Naive thymus-derived CD4-positive, alpha-beta T cell (primary cell): ENCODE measurements at regions of chr9 and their contacts with region 1.

Region 1: DNA sequence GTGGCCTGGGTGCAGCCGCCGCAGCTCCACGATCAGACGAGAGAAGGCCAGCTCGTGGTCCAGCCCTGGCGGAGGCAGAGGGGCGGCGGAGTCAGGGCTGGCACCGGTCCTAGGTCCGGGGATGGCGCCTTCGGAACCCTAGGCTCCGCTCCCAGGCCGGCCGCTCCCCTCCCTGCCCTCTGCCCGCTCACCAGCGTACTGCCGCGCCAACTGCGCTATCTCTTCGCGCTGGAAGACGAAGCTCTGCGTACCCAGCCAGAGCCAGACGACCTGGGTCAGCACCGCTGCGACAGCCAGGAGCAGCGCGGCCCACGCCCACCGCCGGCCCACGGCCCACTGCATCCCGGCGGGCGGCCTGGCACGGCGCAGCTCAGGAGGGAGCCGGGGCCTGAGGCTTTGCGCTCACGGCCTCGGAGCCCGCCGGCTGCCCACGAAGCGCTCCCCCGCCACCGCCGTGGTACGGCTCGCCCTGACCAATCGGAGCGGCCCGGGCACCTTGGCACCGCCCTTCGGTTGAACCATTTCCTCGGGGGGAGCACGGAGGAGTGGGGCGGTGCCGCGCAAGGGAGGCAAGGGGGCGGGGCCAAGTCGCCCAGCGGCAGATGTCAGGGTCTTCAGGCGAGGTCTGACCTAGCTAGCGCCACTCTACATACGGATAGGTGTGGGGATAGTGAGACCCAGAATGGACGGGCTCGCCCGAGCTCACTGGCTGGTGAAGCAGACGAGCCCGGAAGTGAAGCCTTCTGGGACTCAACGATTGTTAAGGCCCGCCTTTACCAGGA is at the start of gene SIGMAR1:
- DNase-seq: peak; percentile 88 to 97 (median 95)
- ATAC-seq: peak; percentile 97
- H3K4me3 ChIP-seq: peak within 1 kb of the TSS; percentile 94
- H3K4me3 Mint-ChIP-seq: peak within 1 kb of the TSS; percentile 88 to 93 (median 90)
- H3K27ac ChIP-seq: peak within 1 kb of the TSS; percentile 70
- H3K27ac Mint-ChIP-seq: peak within 1 kb of the TSS; percentile 88 to 98 (median 95)
- H3K4me1 ChIP-seq: peaks cover 21 to 22% of the 10 kb centered on the region in 2 donors
- H3K4me1 Mint-ChIP-seq: peaks cover 26 to 45% (median 37%) of the 10 kb centered on the region in 7 donors
- H3K27me3 ChIP-seq: no peaks in the 10 kb centered on the region
- H3K27me3 Mint-ChIP-seq: no peaks in the 10 kb centered on the region
- total RNA-seq, gene SIGMAR1: 20.7 to 63.8 (median 46.0) TPM

Region 2: DNA sequence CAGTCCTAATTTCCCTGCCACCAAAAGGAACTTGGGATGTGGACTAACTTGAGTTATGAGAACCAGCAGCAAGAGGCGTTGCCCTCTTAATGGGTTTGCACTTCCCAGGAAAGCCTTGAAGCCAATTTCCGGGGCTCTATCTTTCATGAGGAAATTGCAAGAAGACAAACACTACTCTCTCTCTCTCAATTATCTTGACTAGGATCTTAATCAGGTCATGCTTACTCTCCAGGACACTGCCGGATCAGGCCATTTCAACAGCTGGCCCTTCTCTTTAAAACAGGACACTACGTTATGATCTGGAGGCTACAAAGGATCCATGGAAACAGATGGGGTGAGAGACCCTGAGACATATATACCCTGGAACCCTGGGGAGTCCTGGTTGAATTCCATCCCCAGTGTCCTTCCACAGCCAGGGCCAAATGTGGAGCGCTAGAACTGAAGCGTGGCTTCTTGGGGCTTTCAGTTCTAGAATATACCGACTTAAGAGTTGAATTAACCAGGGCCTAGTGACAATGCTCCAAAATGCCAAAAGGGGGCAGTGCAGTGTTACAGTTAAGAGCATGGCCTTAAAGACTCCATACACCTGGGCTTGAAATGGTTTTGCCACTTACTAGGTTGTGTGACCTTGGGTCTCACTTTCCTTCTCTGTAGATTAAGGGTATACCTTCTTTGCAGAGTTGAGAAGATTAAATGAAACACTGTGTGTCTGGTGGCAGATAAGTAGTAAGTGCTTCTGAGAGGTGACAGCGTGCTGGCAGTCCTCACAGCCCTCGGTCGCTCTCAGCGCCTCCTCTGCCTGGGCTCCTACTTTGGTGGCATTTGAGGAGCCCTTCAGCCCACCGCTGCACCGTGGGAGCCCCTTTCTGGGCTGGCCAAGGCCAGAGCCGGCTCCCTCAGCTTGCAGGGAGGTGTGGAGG is 200.3 kb before region 1 on chr9:
- CTCF ChIA-PET with region 1: interaction called, 4 read pairs
- POLR2A ChIA-PET with region 1: no interaction called
- intact Hi-C with region 1: loop called in 1 of 2 experiments (anchors 1 kb)
- DNase-seq: peak in 8 of 9 donors; percentile 49 to 74 (median 65)
- ATAC-seq: peak; percentile 92
- H3K4me3 ChIP-seq: no peak overlapping the region
- H3K4me3 Mint-ChIP-seq: no peak overlapping the region
- H3K27ac ChIP-seq: no peak overlapping the region
- H3K27ac Mint-ChIP-seq: no peak overlapping the region
- H3K4me1 ChIP-seq: peaks cover 0 to 6% of the 10 kb centered on the region in 2 donors
- H3K4me1 Mint-ChIP-seq: peaks cover 6 to 26% (median 17%) of the 10 kb centered on the region in 7 donors
- H3K27me3 ChIP-seq: no peaks in the 10 kb centered on the region
- H3K27me3 Mint-ChIP-seq: no peaks in the 10 kb centered on the region

Region 3: GRCh38 chr9:34546834-34547827 is 90.4 kb before region 1 on chr9:
- CTCF ChIA-PET with region 1: interaction called, 4 read pairs
- POLR2A ChIA-PET with region 1: no interaction called
- intact Hi-C with region 1: loop called (anchors 1 kb)
- DNase-seq: peak in 5 of 9 donors; percentile 21 to 47 (median 23)
- ATAC-seq: peak; percentile 58
- H3K4me3 ChIP-seq: no peak overlapping the region
- H3K4me3 Mint-ChIP-seq: peak overlapping the region in 1 of 10 donors; percentile 34
- H3K27ac ChIP-seq: no peak overlapping the region
- H3K27ac Mint-ChIP-seq: no peak overlapping the region
- H3K4me1 ChIP-seq: no peaks in the 10 kb centered on the region
- H3K4me1 Mint-ChIP-seq: peaks cover 0 to 10% (median 0%) of the 10 kb centered on the region in 7 donors
- H3K27me3 ChIP-seq: no peaks in the 10 kb centered on the region
- H3K27me3 Mint-ChIP-seq: peaks cover 7 to 34% (median 12%) of the 10 kb centered on the region in 5 donors

Region 4: GRCh38 chr9:34603610-34604231 is 33.8 kb before region 1 on chr9:
- CTCF ChIA-PET with region 1: interaction called, 98 read pairs
- POLR2A ChIA-PET with region 1: no interaction called
- intact Hi-C with region 1: no loop called
- DNase-seq: peak; percentile 53 to 78 (median 71)
- ATAC-seq: peak; percentile 92
- H3K4me3 ChIP-seq: no peak overlapping the region
- H3K4me3 Mint-ChIP-seq: no peak overlapping the region
- H3K27ac ChIP-seq: no peak overlapping the region
- H3K27ac Mint-ChIP-seq: no peak overlapping the region
- H3K4me1 ChIP-seq: no peaks in the 10 kb centered on the region
- H3K4me1 Mint-ChIP-seq: peaks cover 0 to 2% (median 0%) of the 10 kb centered on the region in 7 donors
- H3K27me3 ChIP-seq: no peaks in the 10 kb centered on the region
- H3K27me3 Mint-ChIP-seq: peaks cover 0 to 20% (median 5%) of the 10 kb centered on the region in 5 donors

Region 5: DNA sequence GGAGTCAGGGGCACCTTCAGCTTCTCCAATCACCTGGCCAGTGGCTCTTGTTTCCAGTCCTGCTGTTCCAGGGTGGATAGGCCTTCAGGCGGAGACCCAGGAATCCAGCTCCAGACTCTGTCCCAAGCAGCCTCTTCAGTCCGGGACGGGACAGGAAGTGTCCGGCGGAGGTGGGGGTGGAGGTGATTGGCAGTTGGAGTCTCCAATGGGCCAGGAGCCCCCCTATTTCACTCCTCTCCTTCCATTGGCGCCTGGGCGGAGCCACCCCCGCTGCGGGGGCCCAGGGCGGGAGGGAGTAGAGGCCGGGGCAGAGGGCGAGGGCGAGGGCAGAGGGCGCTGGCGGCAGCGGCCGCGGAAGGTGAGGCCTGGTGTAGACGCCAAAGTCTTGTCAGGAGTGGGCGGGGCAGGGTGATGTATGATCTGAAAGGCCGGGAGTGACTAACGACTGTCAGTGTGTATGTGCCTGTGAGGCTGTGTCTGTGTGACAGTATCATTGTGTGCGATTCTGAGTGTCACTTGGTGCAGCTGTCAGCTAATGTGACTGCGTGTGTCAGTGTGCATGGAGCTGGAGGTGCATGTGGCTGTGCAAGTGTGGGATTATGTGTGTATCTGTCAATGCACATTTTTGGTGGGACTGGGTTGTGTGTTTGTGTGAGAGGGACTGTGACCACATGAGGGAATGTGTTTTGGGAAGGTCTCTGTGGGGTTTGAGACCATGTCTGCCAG is 14.5 kb after region 1 on chr9 and contains the start of gene IL11RA:
- CTCF ChIA-PET with region 1: interaction called, 45 read pairs
- POLR2A ChIA-PET with region 1: interaction called, 87 read pairs
- intact Hi-C with region 1: no loop called
- DNase-seq: peak in 1 of 9 donors; percentile 31
- ATAC-seq: peak; percentile 74
- H3K4me3 ChIP-seq: no peak within 1 kb of the TSS
- H3K4me3 Mint-ChIP-seq: peak within 1 kb of the TSS in 7 of 10 donors; percentile 1 to 65 (median 22)
- H3K27ac ChIP-seq: peak within 1 kb of the TSS; percentile 24
- H3K27ac Mint-ChIP-seq: peak within 1 kb of the TSS in 8 of 9 donors; percentile 52 to 87 (median 80)
- H3K4me1 ChIP-seq: peaks cover 19 to 33% of the 10 kb centered on the region in 2 donors
- H3K4me1 Mint-ChIP-seq: peaks cover 38 to 61% (median 48%) of the 10 kb centered on the region in 7 donors
- H3K27me3 ChIP-seq: no peaks in the 10 kb centered on the region
- H3K27me3 Mint-ChIP-seq: no peaks in the 10 kb centered on the region
- total RNA-seq, gene IL11RA: 81.7 to 185 (median 144) TPM